Breast epithelium (tissue), 4 donors: ENCODE measurements at regions of chr11 and their contacts with region 1.

Region 1: GRCh38 chr11:15093432-15093831 is 20.0 kb downstream of the CALCB start:
- DNase-seq: no peak
- H3K4me3 ChIP-seq: no peak overlapping the region
- H3K27ac ChIP-seq: no peak overlapping the region
- H3K4me1 ChIP-seq: no peaks in the 10 kb centered on the region
- H3K27me3 ChIP-seq: no peaks in the 10 kb centered on the region
- CTCF ChIP-seq: no peak
- POLR2A ChIP-seq: no peak

Region 2: GRCh38 chr11:15557457-15558230 is 464.2 kb after region 1 on chr11:
- intact Hi-C with region 1: loop called (anchors 5 kb)
- DNase-seq: no peak
- H3K4me3 ChIP-seq: no peak overlapping the region
- H3K27ac ChIP-seq: no peak overlapping the region
- H3K4me1 ChIP-seq: no peaks in the 10 kb centered on the region
- H3K27me3 ChIP-seq: no peaks in the 10 kb centered on the region
- CTCF ChIP-seq: no peak
- POLR2A ChIP-seq: no peak